Activated B cell treated with CpG ODN at 0.5 μM for 24 hours (primary cell): ENCODE measurements at regions of chr5 and their contacts with region 1.

Region 1: DNA sequence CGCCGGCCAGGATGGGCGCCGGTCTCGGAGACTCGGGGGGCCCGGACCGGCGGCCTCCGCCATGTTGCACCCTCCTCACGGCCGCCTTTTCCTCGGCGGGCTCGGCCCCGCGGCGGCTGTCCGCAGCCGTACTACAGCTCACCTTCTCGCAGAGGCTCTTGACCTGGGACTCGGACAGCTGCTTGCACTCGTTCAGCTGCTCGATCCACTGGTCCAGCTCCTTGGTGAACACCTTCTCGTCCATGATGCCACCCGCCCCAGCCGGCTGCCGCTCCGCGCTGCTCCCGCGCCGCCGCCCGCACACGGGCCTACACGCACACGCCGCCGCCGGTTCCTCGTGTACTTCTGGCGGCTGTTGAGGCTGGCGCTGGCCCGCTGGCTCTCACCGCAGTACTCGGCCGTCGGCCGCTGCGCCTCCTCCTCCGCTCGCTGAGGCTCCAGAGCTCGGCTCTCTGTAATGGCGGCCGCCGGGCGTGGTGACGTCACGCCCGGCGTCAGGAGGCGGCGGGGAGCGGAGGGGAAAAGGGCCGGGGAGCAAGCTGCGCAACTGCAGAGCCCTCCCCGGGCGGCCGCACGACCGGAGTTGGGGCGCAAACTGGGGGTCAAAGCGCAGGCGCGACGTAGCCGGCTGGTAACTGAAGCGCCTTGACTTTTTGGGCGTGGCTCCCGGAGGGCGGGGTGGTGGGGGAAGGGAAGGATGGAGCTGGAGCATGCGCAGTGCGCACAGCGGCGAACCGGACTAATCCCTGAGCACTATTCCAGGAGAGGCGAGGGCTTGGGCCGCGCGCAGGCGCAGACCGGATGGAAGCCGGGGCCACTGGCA is at the start of gene PPP2CA:
- DNase-seq: peak; percentile 100
- ATAC-seq: peak; percentile 79
- H3K4me3 Mint-ChIP-seq: peak within 1 kb of the TSS; percentile 94
- H3K27ac Mint-ChIP-seq: peak within 1 kb of the TSS; percentile 95
- H3K4me1 Mint-ChIP-seq: peaks cover 51% of the 10 kb centered on the region
- H3K27me3 Mint-ChIP-seq: no peaks in the 10 kb centered on the region
- CTCF ChIP-seq: no peak
- total RNA-seq, gene PPP2CA: 103 and 118 TPM in 2 replicates

Region 2: DNA sequence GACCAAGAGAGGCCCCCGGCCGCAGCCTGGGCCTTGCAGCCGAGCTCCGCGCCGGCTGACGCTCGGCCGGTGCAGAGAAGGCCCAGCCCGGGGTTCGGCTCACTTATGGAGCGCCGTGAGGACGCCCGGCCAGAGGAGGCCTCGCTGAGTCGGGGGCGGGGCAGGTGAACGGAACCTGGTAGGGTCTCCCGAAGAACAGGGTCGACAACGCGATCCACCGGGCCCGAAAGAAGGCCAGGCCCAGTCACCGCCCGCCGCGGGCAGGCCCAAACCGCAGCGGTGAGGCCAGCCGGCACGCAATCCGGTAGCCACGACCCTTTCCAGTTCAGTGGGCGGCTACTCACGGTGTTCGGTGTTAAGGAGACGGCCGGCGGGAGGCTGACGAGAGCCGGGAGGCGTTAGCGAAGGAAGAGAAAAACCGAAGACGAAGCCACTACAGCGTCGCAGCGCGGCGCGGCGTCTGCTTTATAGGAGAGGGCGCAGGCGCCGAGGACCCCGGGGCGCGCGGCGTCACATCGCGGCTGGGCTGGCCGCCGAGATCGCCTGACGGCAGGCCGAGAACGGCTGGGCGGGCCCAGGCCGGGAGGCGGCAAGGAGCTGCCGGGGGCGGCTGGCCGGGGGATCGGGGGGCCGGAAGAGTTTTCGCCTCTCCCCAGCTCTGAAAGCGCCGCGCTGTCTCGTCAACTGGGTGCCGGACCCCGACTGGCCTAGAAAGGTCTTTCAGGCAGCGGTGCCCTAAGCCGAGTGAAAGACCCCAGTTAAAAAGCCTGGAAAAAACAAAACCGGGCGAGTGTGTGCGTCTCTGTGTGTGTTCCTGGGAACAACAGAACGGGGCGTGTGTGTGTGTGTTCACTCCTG is 49.1 kb before region 1 on chr5 and contains the start of gene SKP1:
- CTCF ChIA-PET with region 1: no interaction called
- POLR2A ChIA-PET with region 1: interaction called, 53 read pairs
- intact Hi-C with region 1: loop called (anchors 1 kb)
- DNase-seq: peak; percentile 91
- ATAC-seq: peak; percentile 86
- H3K4me3 Mint-ChIP-seq: peak within 1 kb of the TSS; percentile 93
- H3K27ac Mint-ChIP-seq: peak within 1 kb of the TSS; percentile 96
- H3K4me1 Mint-ChIP-seq: peaks cover 26% of the 10 kb centered on the region
- H3K27me3 Mint-ChIP-seq: no peaks in the 10 kb centered on the region
- CTCF ChIP-seq: no peak
- total RNA-seq, gene SKP1: 193 and 211 TPM in 2 replicates

Region 3: GRCh38 chr5:134236318-134236717 is 10.5 kb after region 1 on chr5:
- CTCF ChIA-PET with region 1: no interaction called
- POLR2A ChIA-PET with region 1: interaction called, 10 read pairs
- intact Hi-C with region 1: no loop called
- DNase-seq: no peak
- ATAC-seq: no peak
- H3K4me3 Mint-ChIP-seq: no peak overlapping the region
- H3K27ac Mint-ChIP-seq: no peak overlapping the region
- H3K4me1 Mint-ChIP-seq: peaks cover 8% of the 10 kb centered on the region
- H3K27me3 Mint-ChIP-seq: no peaks in the 10 kb centered on the region
- CTCF ChIP-seq: no peak

Region 4: DNA sequence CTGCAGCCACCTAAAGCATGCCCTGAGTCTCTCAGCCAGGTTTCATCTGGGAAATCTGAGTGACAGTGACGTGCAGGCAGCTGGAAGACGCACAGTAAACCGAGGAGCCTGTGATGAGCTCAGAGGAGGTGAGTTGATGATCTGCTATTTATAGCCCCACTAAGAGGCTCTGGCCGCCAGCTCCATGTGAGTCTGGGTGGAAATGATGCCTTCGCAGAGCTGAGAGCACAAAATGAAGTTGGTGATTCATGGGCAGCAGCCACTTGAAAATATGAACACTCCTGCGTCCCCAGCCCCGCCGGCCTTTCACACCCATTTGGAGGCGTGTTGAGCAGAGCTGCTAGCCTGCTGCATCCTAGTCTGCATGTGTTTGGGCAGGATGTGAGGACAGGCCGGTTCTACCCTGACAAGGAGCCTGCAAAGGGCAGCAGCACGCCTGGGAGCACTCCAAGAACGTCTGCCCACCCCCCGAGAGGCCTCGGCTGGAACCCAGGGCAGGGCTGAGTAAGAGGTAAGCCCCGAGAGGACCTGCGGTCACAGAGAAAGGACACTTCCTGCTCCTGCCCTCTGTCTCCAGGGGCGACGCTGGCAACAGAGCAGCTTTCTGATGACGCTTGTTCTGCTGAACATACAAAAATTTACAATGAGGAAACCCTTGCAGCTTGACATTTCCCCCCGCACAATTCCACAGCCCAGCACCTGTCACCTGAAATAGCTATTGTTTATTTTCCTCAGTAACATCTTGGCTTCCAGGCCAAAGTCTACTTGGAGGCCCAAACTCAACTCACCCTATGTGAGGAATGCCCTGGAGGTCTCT is 210.9 kb after region 1 on chr5:
- CTCF ChIA-PET with region 1: no interaction called
- POLR2A ChIA-PET with region 1: no interaction called
- intact Hi-C with region 1: loop called (anchors 5 kb)
- DNase-seq: peak; percentile 64
- ATAC-seq: peak; percentile 95
- H3K4me3 Mint-ChIP-seq: peak overlapping the region; percentile 56
- H3K27ac Mint-ChIP-seq: peak overlapping the region; percentile 68
- H3K4me1 Mint-ChIP-seq: peaks cover 25% of the 10 kb centered on the region
- H3K27me3 Mint-ChIP-seq: no peaks in the 10 kb centered on the region
- CTCF ChIP-seq: no peak

Region 5: GRCh38 chr5:134555890-134556311 is 330.1 kb after region 1 on chr5:
- CTCF ChIA-PET with region 1: no interaction called
- POLR2A ChIA-PET with region 1: interaction called, 17 read pairs
- intact Hi-C with region 1: no loop called
- DNase-seq: peak; percentile 75
- ATAC-seq: peak; percentile 73
- H3K4me3 Mint-ChIP-seq: peak overlapping the region; percentile 75
- H3K27ac Mint-ChIP-seq: peak overlapping the region; percentile 98
- H3K4me1 Mint-ChIP-seq: peaks cover 64% of the 10 kb centered on the region
- H3K27me3 Mint-ChIP-seq: no peaks in the 10 kb centered on the region
- CTCF ChIP-seq: no peak

Region 6: DNA sequence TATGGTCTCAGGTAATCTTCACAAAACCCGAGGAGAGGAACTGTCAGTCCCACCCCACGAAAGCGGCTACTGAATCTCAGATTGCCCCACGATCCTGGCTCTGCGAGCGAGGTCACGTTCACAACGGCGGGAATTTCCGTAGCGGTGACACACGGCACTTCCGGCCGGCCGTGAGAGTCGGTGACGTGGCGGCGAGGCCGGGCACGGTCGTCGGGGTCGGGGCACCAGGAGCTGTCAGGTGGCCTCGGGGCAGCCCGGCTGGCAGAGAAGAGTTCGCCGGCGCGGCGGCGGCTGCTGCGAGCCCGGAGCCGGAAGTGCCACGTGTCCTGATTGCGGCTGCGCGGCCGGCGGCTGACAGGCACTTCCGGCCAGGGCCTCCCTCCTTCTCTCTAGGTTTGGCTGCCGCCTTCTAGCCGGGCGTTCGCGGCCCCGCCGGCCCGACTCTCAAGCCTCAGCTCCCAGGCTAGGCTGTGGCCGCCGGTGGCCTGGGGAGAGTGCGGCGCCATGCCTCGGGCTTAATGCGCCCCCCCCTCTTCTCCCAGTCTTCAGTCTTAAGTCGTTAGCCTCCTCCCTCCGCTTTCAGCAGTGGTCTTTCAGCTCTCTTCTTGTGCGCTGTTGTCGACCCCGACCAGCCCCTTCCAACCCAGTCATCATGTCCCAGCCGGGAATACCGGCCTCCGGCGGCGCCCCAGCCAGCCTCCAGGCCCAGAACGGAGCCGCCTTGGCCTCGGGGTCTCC is 422.8 kb after region 1 on chr5 and contains the start of gene SEC24A:
- CTCF ChIA-PET with region 1: no interaction called
- POLR2A ChIA-PET with region 1: no interaction called
- intact Hi-C with region 1: loop called (anchors 1 kb)
- DNase-seq: peak; percentile 86
- ATAC-seq: peak; percentile 77
- H3K4me3 Mint-ChIP-seq: peak within 1 kb of the TSS; percentile 91
- H3K27ac Mint-ChIP-seq: peak within 1 kb of the TSS; percentile 96
- H3K4me1 Mint-ChIP-seq: peaks cover 22% of the 10 kb centered on the region
- H3K27me3 Mint-ChIP-seq: no peaks in the 10 kb centered on the region
- CTCF ChIP-seq: no peak
- total RNA-seq, gene SEC24A: 13.8 and 15.6 TPM in 2 replicates

Region 7: GRCh38 chr5:134873987-134874830 is 648.4 kb after region 1 on chr5 and contains the start of gene TXNDC15:
- CTCF ChIA-PET with region 1: no interaction called
- POLR2A ChIA-PET with region 1: no interaction called
- intact Hi-C with region 1: loop called (anchors 1 kb)
- DNase-seq: peak; percentile 78
- ATAC-seq: peak; percentile 93
- H3K4me3 Mint-ChIP-seq: peak within 1 kb of the TSS; percentile 95
- H3K27ac Mint-ChIP-seq: peak within 1 kb of the TSS; percentile 94
- H3K4me1 Mint-ChIP-seq: peaks cover 34% of the 10 kb centered on the region
- H3K27me3 Mint-ChIP-seq: no peaks in the 10 kb centered on the region
- CTCF ChIP-seq: no peak
- total RNA-seq, gene TXNDC15: 26.6 and 30.7 TPM in 2 replicates